ENCODE measurements at regions of chr2 and their contacts with region 1.

Region 1: DNA sequence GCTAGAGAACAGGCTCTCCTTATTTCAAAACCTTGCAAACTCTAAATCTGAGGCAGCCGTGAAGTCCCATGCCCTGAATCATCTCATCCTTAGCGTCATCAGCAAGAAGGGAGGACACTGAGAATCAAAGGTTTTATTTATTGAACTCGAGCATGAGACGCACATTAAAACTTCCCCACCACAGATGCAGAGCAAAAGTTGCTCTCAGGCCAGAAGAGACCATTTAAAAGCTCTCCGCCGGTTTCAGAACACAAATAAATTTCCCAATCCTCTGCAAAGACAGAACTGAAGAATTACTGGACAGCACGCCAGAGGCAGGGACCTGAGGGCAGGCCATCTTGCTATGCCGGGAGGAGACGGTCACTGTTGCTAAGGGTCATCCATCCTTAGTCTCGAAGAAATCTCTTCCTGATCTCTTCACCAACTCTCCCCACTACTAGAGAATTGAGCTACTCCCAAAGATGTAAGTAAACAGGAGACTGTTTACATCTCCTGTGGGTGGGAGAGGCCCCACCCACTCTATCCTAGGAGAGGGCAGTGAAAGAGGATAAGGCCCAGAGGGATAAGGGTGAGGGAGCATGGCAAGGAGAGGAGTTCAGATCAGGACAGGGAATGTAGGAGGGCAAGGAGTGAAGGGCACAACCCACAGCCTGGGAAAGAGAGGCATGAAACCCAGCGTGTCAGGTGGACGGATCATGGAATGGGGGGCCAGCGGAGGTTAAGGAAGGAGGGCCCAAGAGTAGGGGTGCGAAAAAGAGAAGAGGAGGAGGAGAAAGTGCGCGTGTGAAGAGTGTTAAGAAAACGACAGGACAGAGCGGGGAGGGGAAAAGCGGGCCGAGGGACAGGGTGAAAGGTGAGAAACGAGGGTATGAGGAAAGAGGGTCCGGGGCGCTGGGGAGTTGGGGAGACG is 1.1 kb downstream of the AMMECR1L start:
- DNase-seq: no peak
- H3K4me3 ChIP-seq: peak overlapping the region; percentile 66 to 83 (median 71)
- H3K27ac ChIP-seq: peak overlapping the region; percentile 88 to 93 (median 92)
- H3K4me1 ChIP-seq: peaks cover 50 to 69% (median 66%) of the 10 kb centered on the region in 4 donors
- H3K27me3 ChIP-seq: no peaks in the 10 kb centered on the region
- CTCF ChIP-seq: no peak
- EP300 ChIP-seq: no peak
- POLR2A ChIP-seq: no peak

Region 2: GRCh38 chr2:128090945-128091725 is 206.4 kb after region 1 on chr2 and contains the start of gene UGGT1:
- intact Hi-C with region 1: loop called (anchors 10 kb)
- DNase-seq: peak; percentile 97
- H3K4me3 ChIP-seq: peak within 1 kb of the TSS; percentile 72 to 97 (median 92)
- H3K27ac ChIP-seq: peak within 1 kb of the TSS; percentile 75 to 89 (median 88)
- H3K4me1 ChIP-seq: peaks cover 8 to 39% (median 22%) of the 10 kb centered on the region in 4 donors
- H3K27me3 ChIP-seq: no peaks in the 10 kb centered on the region
- CTCF ChIP-seq: peak in 1 of 3 experiments; percentile 11
- EP300 ChIP-seq: no peak
- POLR2A ChIP-seq: peak; percentile 67
- total RNA-seq, gene UGGT1: 27.0 to 32.4 (median 27.6) TPM